MCF 10A (cell line): ENCODE measurements at regions of chr2 and their contacts with region 1.

Region 1: DNA sequence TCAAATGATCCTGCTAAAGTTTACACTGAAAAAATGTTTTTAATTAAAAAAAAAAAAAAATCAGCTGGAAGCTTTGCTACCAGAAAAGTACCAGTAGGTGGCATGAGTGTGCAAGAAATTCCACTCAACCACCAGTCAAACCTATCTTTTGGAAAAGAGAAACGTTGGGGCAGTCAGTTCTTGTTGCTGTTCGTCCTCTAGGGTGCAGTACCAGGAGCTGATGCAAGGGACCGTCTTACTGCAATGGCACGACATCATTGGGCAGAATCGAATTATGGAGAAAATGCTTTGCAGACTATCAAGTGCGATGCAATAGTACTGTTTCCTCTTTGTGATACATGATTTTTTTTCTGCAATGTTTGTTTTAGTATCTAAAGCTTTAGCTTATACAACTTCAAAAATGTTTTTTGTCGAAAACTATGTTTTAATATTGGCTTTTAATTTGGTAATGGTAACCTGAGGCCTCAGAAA is 18.3 kb downstream of the YPEL5 start:
- DNase-seq: peak; percentile 90
- H3K4me3 Mint-ChIP-seq: no peak overlapping the region
- H3K27ac Mint-ChIP-seq: no peak overlapping the region
- H3K4me1 Mint-ChIP-seq: peaks cover 31% of the 10 kb centered on the region
- H3K27me3 Mint-ChIP-seq: no peaks in the 10 kb centered on the region
- CTCF ChIP-seq: peak; percentile 59

Region 2: DNA sequence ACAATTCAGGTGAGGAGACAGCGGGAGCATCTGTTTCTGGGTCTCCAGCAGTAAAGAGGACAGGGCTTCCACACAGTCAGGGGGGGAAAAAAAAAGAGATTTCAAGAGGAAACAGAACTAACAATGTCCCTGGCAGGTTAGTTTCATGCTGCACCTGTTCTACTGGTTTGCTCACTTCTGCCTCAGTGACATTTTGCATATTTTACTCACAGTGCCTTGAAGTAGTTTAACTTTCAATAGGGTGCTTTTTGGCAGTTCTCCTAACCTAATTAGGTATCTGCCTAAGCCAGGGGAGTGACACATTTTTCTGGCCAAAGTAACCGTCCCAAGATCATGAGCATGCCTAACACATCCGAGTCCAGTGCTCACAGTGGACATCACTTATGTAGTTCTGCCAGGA is 134.7 kb before region 1 on chr2:
- CTCF ChIA-PET with region 1: no interaction called
- POLR2A ChIA-PET with region 1: no interaction called
- intact Hi-C with region 1: no loop called
- DNase-seq: no peak
- H3K4me3 Mint-ChIP-seq: no peak overlapping the region
- H3K27ac Mint-ChIP-seq: no peak overlapping the region
- H3K4me1 Mint-ChIP-seq: no peaks in the 10 kb centered on the region
- H3K27me3 Mint-ChIP-seq: peaks cover 45% of the 10 kb centered on the region
- CTCF ChIP-seq: no peak

Region 3: GRCh38 chr2:30146438-30147147 is 18.5 kb before region 1 on chr2 and contains the start of gene YPEL5:
- CTCF ChIA-PET with region 1: interaction called, 80 read pairs
- POLR2A ChIA-PET with region 1: interaction called, 31 read pairs
- intact Hi-C with region 1: no loop called
- DNase-seq: peak; percentile 99
- H3K4me3 Mint-ChIP-seq: peak within 1 kb of the TSS; percentile 77
- H3K27ac Mint-ChIP-seq: peak within 1 kb of the TSS; percentile 95
- H3K4me1 Mint-ChIP-seq: peaks cover 29% of the 10 kb centered on the region
- H3K27me3 Mint-ChIP-seq: no peaks in the 10 kb centered on the region
- CTCF ChIP-seq: no peak
- total RNA-seq, gene YPEL5: 62.5 and 80.6 TPM in 2 replicates

Region 4: GRCh38 chr2:30193104-30193681 is 28.1 kb after region 1 on chr2:
- CTCF ChIA-PET with region 1: interaction called, 16 read pairs
- POLR2A ChIA-PET with region 1: no interaction called
- intact Hi-C with region 1: no loop called
- DNase-seq: peak; percentile 33
- H3K4me3 Mint-ChIP-seq: no peak overlapping the region
- H3K27ac Mint-ChIP-seq: peak overlapping the region; percentile 47
- H3K4me1 Mint-ChIP-seq: peaks cover 9% of the 10 kb centered on the region
- H3K27me3 Mint-ChIP-seq: no peaks in the 10 kb centered on the region
- CTCF ChIP-seq: no peak

Region 5: DNA sequence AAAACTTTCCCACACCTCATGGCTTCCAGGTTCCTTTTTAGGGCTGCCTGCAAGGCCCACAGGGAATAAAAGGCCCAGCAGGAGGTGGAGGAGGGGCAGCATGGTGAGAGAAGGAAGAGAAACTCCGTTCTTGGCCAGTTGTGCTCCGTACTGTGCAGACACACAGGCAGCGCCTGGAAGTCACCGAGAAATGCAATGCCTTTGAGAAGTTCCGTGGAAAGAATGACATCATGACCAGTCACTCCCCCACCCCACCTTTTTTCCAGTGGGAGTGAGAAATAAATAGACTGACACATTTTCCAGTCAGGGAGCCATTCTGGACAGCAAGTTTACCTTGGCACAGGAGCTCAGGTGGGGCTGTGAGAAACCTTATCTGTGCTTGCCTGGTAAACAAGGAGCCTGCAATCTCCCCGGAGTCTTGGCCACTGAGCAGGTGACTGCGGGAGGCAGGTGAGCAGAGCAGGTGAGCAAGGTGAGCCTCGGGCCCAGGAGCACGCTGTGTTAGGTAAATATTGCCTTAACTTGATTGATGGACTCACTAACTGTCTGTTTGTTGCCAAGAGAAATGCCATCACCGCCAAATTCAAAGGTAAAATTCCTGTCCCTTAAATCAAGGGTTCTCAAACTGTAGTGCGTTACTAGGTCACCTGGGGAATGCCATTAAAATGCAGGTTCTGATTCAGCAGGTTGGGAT is 52.7 kb after region 1 on chr2:
- CTCF ChIA-PET with region 1: interaction called, 206 read pairs
- POLR2A ChIA-PET with region 1: no interaction called
- intact Hi-C with region 1: no loop called
- DNase-seq: peak; percentile 69
- H3K4me3 Mint-ChIP-seq: no peak overlapping the region
- H3K27ac Mint-ChIP-seq: no peak overlapping the region
- H3K4me1 Mint-ChIP-seq: peaks cover 8% of the 10 kb centered on the region
- H3K27me3 Mint-ChIP-seq: no peaks in the 10 kb centered on the region
- CTCF ChIP-seq: no peak

Region 6: GRCh38 chr2:30691948-30692828 is 527.1 kb after region 1 on chr2:
- CTCF ChIA-PET with region 1: interaction called, 18 read pairs
- POLR2A ChIA-PET with region 1: no interaction called
- intact Hi-C with region 1: no loop called
- DNase-seq: peak; percentile 29
- H3K4me3 Mint-ChIP-seq: no peak overlapping the region
- H3K27ac Mint-ChIP-seq: no peak overlapping the region
- H3K4me1 Mint-ChIP-seq: no peaks in the 10 kb centered on the region
- H3K27me3 Mint-ChIP-seq: peaks cover 17% of the 10 kb centered on the region
- CTCF ChIP-seq: peak; percentile 36